ENCODE measurements at regions of chrX and their contacts with region 1.

Region 1: GRCh38 chrX:23667239-23668177 is at the start of gene PRDX4:
- DNase-seq: peak; percentile 66
- ATAC-seq: peak; percentile 85
- H3K4me3 Mint-ChIP-seq: peak within 1 kb of the TSS; percentile 84
- H3K27ac Mint-ChIP-seq: peak within 1 kb of the TSS; percentile 91
- H3K4me1 Mint-ChIP-seq: peaks cover 25% of the 10 kb centered on the region
- H3K27me3 Mint-ChIP-seq: no peaks in the 10 kb centered on the region
- CTCF ChIP-seq: no peak
- total RNA-seq, gene PRDX4: 29.2 and 35.5 TPM in 2 replicates

Region 2: GRCh38 chrX:22526339-22526738 is 1141.2 kb before region 1 on chrX:
- CTCF ChIA-PET with region 1: no interaction called
- POLR2A ChIA-PET with region 1: no interaction called
- intact Hi-C with region 1: loop called (anchors 5 kb)
- DNase-seq: no peak
- ATAC-seq: peak; percentile 98
- H3K4me3 Mint-ChIP-seq: peak overlapping the region; percentile 70
- H3K27ac Mint-ChIP-seq: peak overlapping the region; percentile 89
- H3K4me1 Mint-ChIP-seq: peaks cover 35% of the 10 kb centered on the region
- H3K27me3 Mint-ChIP-seq: no peaks in the 10 kb centered on the region
- CTCF ChIP-seq: no peak

Region 3: GRCh38 chrX:23871905-23872546 is 204.5 kb after region 1 on chrX:
- CTCF ChIA-PET with region 1: no interaction called
- POLR2A ChIA-PET with region 1: no interaction called
- intact Hi-C with region 1: no loop called
- DNase-seq: no peak
- ATAC-seq: no peak
- H3K4me3 Mint-ChIP-seq: no peak overlapping the region
- H3K27ac Mint-ChIP-seq: no peak overlapping the region
- H3K4me1 Mint-ChIP-seq: no peaks in the 10 kb centered on the region
- H3K27me3 Mint-ChIP-seq: no peaks in the 10 kb centered on the region
- CTCF ChIP-seq: no peak

Region 4: GRCh38 chrX:23907498-23908218 is 240.2 kb after region 1 on chrX and contains the starts of genes APOO and CXorf58:
- CTCF ChIA-PET with region 1: interaction called, 3 read pairs
- POLR2A ChIA-PET with region 1: interaction called, 4 read pairs
- intact Hi-C with region 1: loop called (anchors 1 kb)
- DNase-seq: peak; percentile 85
- ATAC-seq: peak; percentile 90
- H3K4me3 Mint-ChIP-seq: peak within 1 kb of the TSS; percentile 82
- H3K27ac Mint-ChIP-seq: peak within 1 kb of the TSS; percentile 88
- H3K4me1 Mint-ChIP-seq: peaks cover 17% of the 10 kb centered on the region
- H3K27me3 Mint-ChIP-seq: no peaks in the 10 kb centered on the region
- CTCF ChIP-seq: peak; percentile 7
- total RNA-seq, gene APOO: 14.0 and 16.6 TPM in 2 replicates
- total RNA-seq, gene CXorf58: not detected in 2 replicates

Region 5: DNA sequence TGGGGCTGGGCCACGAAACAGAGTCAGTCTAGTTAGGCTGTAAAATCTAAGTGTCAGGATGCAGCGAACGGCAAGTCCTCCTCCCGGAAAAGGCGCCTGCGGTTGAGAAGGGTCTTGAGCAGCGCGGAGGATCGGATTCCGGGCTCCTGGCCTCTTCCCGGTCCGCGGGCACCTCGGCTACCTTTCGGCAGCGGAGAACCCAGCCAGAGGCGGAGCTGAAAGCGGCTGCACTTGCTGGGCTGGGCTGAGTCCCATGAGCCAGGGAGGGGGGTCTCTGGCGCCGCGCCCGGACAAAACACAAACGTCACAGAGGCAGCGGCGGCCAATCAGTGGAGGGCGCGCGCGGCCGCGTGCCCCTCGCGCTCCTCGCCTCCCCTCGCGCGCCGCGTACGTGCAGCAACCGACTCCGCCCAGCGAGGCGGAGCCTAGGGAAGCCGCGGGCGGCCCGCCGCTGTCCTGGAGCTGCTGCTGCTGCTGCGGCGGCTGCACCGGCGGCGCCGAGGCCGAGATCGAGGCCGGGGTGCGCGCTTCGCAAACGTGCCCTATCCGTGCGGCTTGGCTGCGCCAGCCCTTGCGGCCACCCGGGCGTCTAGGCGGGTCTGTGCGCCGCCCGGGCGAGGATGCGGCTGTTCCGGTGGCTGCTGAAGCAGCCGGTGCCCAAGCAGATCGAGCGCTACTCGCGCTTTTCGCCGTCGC is 797.5 kb after region 1 on chrX and contains the start of gene PDK3:
- CTCF ChIA-PET with region 1: no interaction called
- POLR2A ChIA-PET with region 1: no interaction called
- intact Hi-C with region 1: loop called (anchors 10 kb)
- DNase-seq: peak; percentile 77
- ATAC-seq: peak; percentile 95
- H3K4me3 Mint-ChIP-seq: peak within 1 kb of the TSS; percentile 84
- H3K27ac Mint-ChIP-seq: peak within 1 kb of the TSS; percentile 83
- H3K4me1 Mint-ChIP-seq: peaks cover 47% of the 10 kb centered on the region
- H3K27me3 Mint-ChIP-seq: no peaks in the 10 kb centered on the region
- CTCF ChIP-seq: no peak
- total RNA-seq, gene PDK3: 13.6 and 13.9 TPM in 2 replicates